ENCODE measurements at regions of chr2 and their contacts with region 1.

Region 1: DNA sequence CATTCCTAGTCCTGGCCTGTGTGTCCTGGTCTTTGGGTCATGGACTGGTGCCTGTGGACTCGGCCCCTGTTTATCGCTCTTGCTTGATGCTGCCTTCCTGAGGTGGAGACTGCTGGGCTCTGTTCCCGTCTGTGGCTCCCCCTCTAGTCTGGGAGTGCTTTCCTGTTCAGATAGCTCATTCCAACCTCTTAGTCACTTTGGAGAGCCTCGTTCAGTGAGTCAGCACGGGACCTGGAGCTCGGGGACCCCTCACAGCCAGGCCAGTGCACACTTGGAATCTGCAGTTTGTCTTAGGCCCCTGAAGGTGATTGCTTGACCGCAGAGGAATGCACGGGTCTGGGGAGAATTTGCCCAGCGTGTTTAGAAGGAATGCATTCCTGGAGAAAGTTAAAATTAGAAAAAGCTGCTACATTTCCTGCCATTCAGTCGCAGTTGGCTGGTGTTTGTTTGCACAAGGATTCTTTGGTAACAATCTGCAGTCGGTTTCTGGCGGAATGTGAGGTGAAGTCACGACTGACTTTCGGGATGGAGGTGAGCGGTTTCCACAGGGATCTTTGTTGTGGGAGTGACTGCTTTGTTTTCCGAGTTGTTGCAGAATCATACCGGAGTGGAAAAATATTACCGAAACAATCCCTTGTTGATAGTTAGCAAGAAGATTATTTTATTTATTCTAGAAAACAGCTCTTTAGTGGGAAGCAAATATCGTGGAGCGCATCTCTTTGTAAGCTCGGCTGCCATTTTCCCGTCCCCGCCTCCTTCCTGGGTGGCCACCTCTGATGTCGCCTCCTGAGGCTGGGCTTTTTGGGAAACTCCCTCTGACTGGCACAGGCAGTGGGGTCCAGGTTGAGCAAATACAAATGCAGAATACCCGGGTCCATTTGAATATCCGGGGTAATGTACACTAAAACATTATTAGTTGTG is 29.6 kb downstream of the SH3BP4 start:
- DNase-seq: peak; percentile 99
- H3K4me3 ChIP-seq: peak overlapping the region in 2 of 3 experiments; percentile 37 to 53
- H3K27ac ChIP-seq: peak overlapping the region; percentile 97
- H3K4me1 ChIP-seq: peaks cover 76% of the 10 kb centered on the region
- H3K27me3 ChIP-seq: no peaks in the 10 kb centered on the region
- CTCF ChIP-seq: peak in 1 of 2 donors; percentile 4
- POLR2A ChIP-seq: peak; percentile 46

Region 2: GRCh38 chr2:234550511-234551107 is 430.8 kb before region 1 on chr2:
- CTCF ChIA-PET with region 1: interaction called, 8 read pairs
- POLR2A ChIA-PET with region 1: no interaction called
- dilution Hi-C with region 1: no loop called
- intact Hi-C with region 1: loop called (anchors 1 kb)
- DNase-seq: peak; percentile 76
- H3K4me3 ChIP-seq: no peak overlapping the region
- H3K27ac ChIP-seq: no peak overlapping the region
- H3K4me1 ChIP-seq: no peaks in the 10 kb centered on the region
- H3K27me3 ChIP-seq: peaks cover 0 to 6% of the 10 kb centered on the region in 2 experiments
- CTCF ChIP-seq: peak; percentile 84 to 87
- POLR2A ChIP-seq: no peak

Region 3: DNA sequence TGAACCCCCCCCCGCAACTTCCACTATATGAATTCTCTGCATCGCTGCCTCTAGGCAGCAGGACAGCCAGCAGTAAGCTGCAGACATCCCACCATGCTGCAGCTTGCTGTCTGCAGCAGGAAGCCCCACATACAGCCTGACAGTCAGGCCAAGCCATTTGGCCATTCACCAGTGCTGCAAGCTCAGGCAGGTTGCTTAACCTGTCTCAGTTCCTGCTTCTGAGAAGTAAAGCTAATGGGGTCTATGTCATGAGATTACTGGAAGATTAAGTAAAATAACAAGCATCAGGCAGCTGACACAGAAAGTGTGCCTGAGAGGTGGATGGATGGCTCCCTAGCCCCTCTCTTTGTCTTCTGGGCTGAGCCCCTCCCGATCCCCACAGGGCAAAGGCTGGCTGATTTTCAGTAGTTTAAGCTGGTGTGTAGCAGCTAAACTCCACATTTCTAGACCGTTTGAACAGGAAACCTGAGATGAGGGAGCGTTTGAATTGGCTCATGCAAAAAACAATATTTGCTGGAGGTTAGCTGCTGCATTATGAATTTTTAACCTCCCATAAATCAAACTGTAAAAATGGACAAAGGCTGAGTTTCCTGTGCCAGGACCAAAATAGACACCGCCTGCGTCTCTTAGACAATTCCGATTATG is 290.8 kb before region 1 on chr2:
- CTCF ChIA-PET with region 1: interaction called, 5 read pairs
- POLR2A ChIA-PET with region 1: interaction called, 4 read pairs
- dilution Hi-C with region 1: no loop called
- intact Hi-C with region 1: loop called (anchors 1 kb)
- DNase-seq: peak; percentile 97
- H3K4me3 ChIP-seq: no peak overlapping the region
- H3K27ac ChIP-seq: peak overlapping the region; percentile 75
- H3K4me1 ChIP-seq: peaks cover 40% of the 10 kb centered on the region
- H3K27me3 ChIP-seq: no peaks in the 10 kb centered on the region
- CTCF ChIP-seq: no peak
- POLR2A ChIP-seq: no peak

Region 4: DNA sequence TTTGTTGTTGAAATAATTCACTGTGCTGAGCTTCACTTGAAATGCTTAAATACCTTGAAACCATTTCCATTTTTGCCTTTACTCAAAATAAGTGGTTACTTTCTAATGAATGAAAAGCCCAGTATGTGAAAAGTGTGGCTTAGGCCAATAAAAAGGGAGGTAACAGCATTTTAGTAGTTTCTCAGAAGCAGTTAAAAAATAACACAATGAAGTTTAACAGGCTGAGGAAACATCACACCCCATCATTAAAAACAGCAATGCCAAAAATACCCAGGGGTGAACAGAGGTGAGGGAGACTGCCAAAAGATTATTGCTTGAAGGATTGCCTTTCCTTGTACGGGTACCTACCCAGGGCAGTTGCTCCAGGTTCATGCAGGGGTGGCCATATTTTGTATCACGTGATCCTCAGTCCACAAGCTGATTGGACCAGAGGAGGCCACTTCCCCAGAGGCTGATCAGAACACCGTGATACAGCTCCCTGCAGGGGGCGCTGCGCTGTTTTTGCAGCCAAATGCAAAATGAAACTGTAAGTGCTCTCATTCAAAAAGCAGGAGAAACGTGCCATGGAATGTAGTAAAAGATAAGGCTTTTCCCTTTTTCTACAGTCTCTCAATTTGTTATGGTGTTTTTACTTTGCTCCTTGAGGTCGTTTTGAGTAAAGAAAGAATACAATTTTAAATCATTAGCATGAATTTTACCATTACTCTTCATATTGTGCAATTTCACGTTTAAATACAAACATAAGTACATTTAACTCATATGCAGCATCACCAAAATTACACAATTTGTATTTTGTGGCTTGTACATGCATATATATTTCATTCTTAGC is 99.8 kb before region 1 on chr2:
- CTCF ChIA-PET with region 1: interaction called, 23 read pairs
- POLR2A ChIA-PET with region 1: interaction called, 3 read pairs
- dilution Hi-C with region 1: no loop called
- intact Hi-C with region 1: loop called (anchors 1 kb)
- DNase-seq: peak; percentile 92
- H3K4me3 ChIP-seq: peak overlapping the region in 1 of 3 experiments; percentile 12
- H3K27ac ChIP-seq: peak overlapping the region; percentile 79
- H3K4me1 ChIP-seq: peaks cover 23% of the 10 kb centered on the region
- H3K27me3 ChIP-seq: no peaks in the 10 kb centered on the region
- CTCF ChIP-seq: peak; percentile 87 to 91
- POLR2A ChIP-seq: peak; percentile 23

Region 5: GRCh38 chr2:234913208-234913626 is 68.2 kb before region 1 on chr2:
- CTCF ChIA-PET with region 1: no interaction called
- POLR2A ChIA-PET with region 1: no interaction called
- dilution Hi-C with region 1: no loop called
- intact Hi-C with region 1: no loop called
- DNase-seq: no peak
- H3K4me3 ChIP-seq: no peak overlapping the region
- H3K27ac ChIP-seq: no peak overlapping the region
- H3K4me1 ChIP-seq: no peaks in the 10 kb centered on the region
- H3K27me3 ChIP-seq: no peaks in the 10 kb centered on the region
- CTCF ChIP-seq: no peak
- POLR2A ChIP-seq: no peak

Region 6: GRCh38 chr2:234970467-234970866 is 11.0 kb before region 1 on chr2:
- CTCF ChIA-PET with region 1: interaction called, 18 read pairs
- POLR2A ChIA-PET with region 1: interaction called, 21 read pairs
- dilution Hi-C with region 1: no loop called
- intact Hi-C with region 1: loop called (anchors 1 kb)
- DNase-seq: peak; percentile 82
- H3K4me3 ChIP-seq: no peak overlapping the region
- H3K27ac ChIP-seq: peak overlapping the region; percentile 84
- H3K4me1 ChIP-seq: peaks cover 41% of the 10 kb centered on the region
- H3K27me3 ChIP-seq: no peaks in the 10 kb centered on the region
- CTCF ChIP-seq: no peak
- POLR2A ChIP-seq: no peak

Region 7: GRCh38 chr2:235050992-235051351 is 69.5 kb after region 1 on chr2:
- CTCF ChIA-PET with region 1: interaction called, 4 read pairs
- POLR2A ChIA-PET with region 1: no interaction called
- dilution Hi-C with region 1: no loop called
- intact Hi-C with region 1: loop called (anchors 1 kb)
- DNase-seq: peak; percentile 88
- H3K4me3 ChIP-seq: no peak overlapping the region
- H3K27ac ChIP-seq: peak overlapping the region; percentile 69
- H3K4me1 ChIP-seq: peaks cover 28% of the 10 kb centered on the region
- H3K27me3 ChIP-seq: no peaks in the 10 kb centered on the region
- CTCF ChIP-seq: peak in 1 of 2 donors; percentile 10
- POLR2A ChIP-seq: no peak